Psoas muscle (tissue), 8 donors: ENCODE measurements at regions of chr1 and their contacts with region 1.

Region 1: GRCh38 chr1:59414406-59415133 is 117.7 kb downstream of the FGGY start:
- DNase-seq: no peak
- ATAC-seq: peak in 3 of 4 donors; percentile 17 to 45 (median 21)
- H3K4me3 ChIP-seq: no peak overlapping the region
- H3K27ac ChIP-seq: no peak overlapping the region
- H3K4me1 ChIP-seq: peaks cover 70% of the 10 kb centered on the region
- H3K27me3 ChIP-seq: no peaks in the 10 kb centered on the region
- CTCF ChIP-seq: no peak

Region 2: DNA sequence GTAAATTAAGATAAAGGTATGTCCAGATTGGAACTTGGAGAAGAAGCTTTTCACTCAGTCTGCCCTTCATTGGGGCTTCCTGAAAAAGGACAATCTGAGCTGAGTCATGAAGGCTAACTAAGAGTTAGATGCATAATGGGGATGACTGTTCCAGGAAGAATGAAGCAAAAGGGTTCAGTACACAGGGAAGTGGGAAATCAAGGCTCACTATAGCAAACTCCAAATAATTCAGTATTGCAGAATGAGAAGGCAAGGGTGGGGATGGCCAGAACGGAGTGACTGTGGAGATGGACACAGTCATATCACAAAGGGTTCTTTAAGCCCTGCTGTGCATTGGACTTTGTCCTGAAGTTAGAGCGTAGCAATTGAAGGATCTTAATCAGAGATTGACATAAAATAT is 40.6 kb after region 1 on chr1:
- intact Hi-C with region 1: no loop called
- DNase-seq: no peak
- ATAC-seq: no peak
- H3K4me3 ChIP-seq: no peak overlapping the region
- H3K27ac ChIP-seq: no peak overlapping the region
- H3K4me1 ChIP-seq: peaks cover 7% of the 10 kb centered on the region
- H3K27me3 ChIP-seq: no peaks in the 10 kb centered on the region
- CTCF ChIP-seq: no peak

Region 3: DNA sequence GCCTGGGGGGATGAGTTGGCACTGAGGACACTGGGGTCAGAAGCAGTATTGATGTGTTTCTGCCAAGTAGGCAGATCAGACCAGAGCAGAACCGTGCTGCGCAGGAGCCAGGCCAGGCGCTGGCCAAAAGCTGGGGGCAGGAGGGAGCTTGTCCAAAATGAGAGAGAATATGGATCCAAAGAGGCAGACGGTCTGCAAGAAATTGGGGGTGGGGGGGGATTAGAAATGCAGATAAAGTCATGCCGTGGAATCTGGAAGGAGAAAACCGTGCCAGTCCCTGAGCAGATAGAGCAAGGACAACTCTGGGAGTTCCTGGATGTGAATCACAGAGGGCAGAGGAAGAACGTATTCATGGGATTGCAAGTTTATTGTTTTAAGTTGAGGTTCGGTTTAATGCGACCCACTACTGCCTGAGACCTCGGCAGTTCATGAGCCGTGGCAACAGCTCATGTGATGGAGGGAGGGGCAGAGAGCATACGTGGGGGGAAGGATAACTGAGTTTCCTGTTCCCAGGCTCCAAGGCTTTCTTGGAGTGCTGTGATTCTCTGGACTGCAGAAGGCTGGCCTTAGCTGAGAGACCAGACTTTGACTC is 106.4 kb after region 1 on chr1:
- intact Hi-C with region 1: loop called in 1 of 2 experiments (anchors 5 kb)
- DNase-seq: no peak
- ATAC-seq: peak; percentile 48 to 62 (median 56)
- H3K4me3 ChIP-seq: no peak overlapping the region
- H3K27ac ChIP-seq: peak overlapping the region; percentile 86
- H3K4me1 ChIP-seq: peaks cover 34% of the 10 kb centered on the region
- H3K27me3 ChIP-seq: no peaks in the 10 kb centered on the region
- CTCF ChIP-seq: no peak